PC-3 (cell line): ENCODE measurements at regions of chr9 and their contacts with region 1.

Region 1: DNA sequence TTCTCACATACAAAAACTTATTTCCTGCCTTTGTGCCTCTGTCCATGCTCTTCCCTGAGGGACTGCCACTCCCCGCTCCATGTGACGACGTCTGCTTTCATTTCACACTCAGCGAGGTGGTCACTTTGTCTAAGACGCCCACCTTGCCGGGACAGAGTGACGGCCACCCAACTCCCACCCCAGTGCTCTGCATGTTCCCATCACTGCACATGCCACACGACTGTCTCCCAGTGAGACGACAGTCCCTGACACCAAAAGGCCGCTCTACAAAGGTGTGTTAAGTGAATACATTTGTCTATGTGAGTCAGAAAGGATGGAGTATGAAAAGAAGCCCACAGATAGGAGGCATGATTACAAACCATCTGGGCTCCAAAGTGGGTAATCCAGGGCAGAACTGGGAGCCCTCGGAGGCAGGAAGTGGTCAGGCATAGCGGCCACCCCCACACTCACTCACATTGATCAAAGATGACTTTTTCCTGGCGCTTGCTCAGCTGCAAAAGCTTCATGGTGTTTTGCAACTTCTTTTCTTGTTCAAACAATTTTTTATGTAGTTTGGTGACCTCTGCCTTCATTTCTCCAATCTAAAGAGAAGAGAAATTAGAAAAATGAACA is 185.8 kb downstream of the CDK5RAP2 start:
- DNase-seq: peak; percentile 90
- ATAC-seq: peak; percentile 87
- H3K4me3 ChIP-seq: peak overlapping the region; percentile 32; the same call in 1 of the 2 replicates
- H3K27ac ChIP-seq: peak overlapping the region; percentile 97
- H3K4me1 ChIP-seq: peaks cover 43% of the 10 kb centered on the region
- H3K27me3 ChIP-seq: no peaks in the 10 kb centered on the region
- CTCF ChIP-seq: no peak; the same call in 1 of the 2 replicates

Region 2: DNA sequence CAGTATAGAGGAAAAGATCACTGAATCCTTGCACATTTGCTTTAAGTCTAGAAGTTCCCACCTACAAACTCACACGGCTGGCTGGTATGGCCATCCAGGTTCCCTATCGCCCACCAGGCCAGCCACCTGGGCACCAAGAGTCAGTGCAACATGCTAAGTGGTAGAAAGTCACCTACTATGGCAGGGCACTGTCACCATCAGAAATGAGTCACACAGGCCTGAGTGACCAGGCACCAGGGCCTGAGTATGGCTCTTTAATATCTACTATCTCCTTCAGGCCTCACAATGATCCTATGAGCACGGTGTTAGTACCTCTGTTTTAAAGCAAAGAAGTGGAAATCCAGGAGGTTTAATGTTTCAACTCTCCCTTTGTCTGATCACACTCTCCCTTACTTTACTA is 29.6 kb after region 1 on chr9:
- CTCF ChIA-PET with region 1: no interaction called
- POLR2A ChIA-PET with region 1: no interaction called
- intact Hi-C with region 1: no loop called
- DNase-seq: no peak
- ATAC-seq: no peak
- H3K4me3 ChIP-seq: no peak overlapping the region
- H3K27ac ChIP-seq: no peak overlapping the region
- H3K4me1 ChIP-seq: no peaks in the 10 kb centered on the region
- H3K27me3 ChIP-seq: no peaks in the 10 kb centered on the region
- CTCF ChIP-seq: no peak

Region 3: DNA sequence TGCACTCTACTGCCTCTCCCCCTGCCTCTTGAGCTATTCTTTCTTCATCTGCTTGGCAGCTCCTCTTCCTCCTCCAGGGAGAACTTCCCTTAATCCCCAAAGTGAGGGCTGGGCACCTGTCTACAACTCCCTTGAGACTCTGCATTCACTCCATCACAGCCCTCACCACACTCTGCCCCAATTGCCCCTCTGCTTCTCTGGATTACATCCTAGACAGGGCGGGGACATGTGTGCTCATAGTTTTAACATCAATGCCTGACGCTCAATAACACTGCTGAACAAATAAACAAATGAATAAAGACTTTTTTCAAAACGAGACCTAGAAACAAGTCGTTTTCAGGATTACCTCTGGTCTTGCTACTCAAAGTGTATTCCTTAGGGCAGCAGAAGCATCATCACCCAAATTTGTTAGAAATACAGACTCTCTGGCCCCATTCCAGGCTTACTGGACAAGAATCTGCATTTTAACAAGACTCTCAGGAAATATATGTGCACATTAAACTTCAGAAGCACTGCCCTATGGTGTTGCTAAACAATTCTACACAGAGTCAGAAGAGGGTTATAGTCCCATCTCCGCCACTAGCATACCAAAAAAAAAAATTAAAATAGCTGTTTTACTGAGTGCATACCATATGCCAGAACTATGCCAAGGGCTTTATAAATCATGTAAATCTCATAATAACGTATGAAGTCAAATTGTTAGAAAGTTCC is 70.2 kb after region 1 on chr9:
- CTCF ChIA-PET with region 1: no interaction called
- POLR2A ChIA-PET with region 1: no interaction called
- intact Hi-C with region 1: loop called (anchors 5 kb)
- DNase-seq: no peak
- ATAC-seq: no peak
- H3K4me3 ChIP-seq: no peak overlapping the region
- H3K27ac ChIP-seq: no peak overlapping the region
- H3K4me1 ChIP-seq: peaks cover 12% of the 10 kb centered on the region; the same call in 1 of the 2 replicates
- H3K27me3 ChIP-seq: no peaks in the 10 kb centered on the region
- CTCF ChIP-seq: no peak

Region 4: GRCh38 chr9:120490888-120491595 is 96.9 kb after region 1 on chr9:
- CTCF ChIA-PET with region 1: no interaction called
- POLR2A ChIA-PET with region 1: no interaction called
- intact Hi-C with region 1: no loop called
- DNase-seq: no peak
- ATAC-seq: no peak
- H3K4me3 ChIP-seq: no peak overlapping the region
- H3K27ac ChIP-seq: no peak overlapping the region
- H3K4me1 ChIP-seq: peaks cover 7% of the 10 kb centered on the region; the same call in 1 of the 2 replicates
- H3K27me3 ChIP-seq: no peaks in the 10 kb centered on the region
- CTCF ChIP-seq: no peak

Region 5: GRCh38 chr9:120579750-120580590 is 185.8 kb after region 1 on chr9 and contains the start of gene CDK5RAP2:
- CTCF ChIA-PET with region 1: no interaction called
- POLR2A ChIA-PET with region 1: no interaction called
- intact Hi-C with region 1: no loop called
- DNase-seq: peak; percentile 96
- ATAC-seq: peak; percentile 97
- H3K4me3 ChIP-seq: peak within 1 kb of the TSS; percentile 94
- H3K27ac ChIP-seq: peak within 1 kb of the TSS; percentile 8; the same call in 1 of the 2 replicates
- H3K4me1 ChIP-seq: peaks cover 7% of the 10 kb centered on the region; the same call in 1 of the 2 replicates
- H3K27me3 ChIP-seq: no peaks in the 10 kb centered on the region
- CTCF ChIP-seq: no peak
- total RNA-seq, gene CDK5RAP2: 37.4 and 41.0 TPM in 2 replicates